ENCODE measurements at regions of chr16 and their contacts with region 1.

Region 1: GRCh38 chr16:16127469-16128116 is 95.7 kb downstream of the ABCC6 start:
- DNase-seq: peak; percentile 82

Region 2: DNA sequence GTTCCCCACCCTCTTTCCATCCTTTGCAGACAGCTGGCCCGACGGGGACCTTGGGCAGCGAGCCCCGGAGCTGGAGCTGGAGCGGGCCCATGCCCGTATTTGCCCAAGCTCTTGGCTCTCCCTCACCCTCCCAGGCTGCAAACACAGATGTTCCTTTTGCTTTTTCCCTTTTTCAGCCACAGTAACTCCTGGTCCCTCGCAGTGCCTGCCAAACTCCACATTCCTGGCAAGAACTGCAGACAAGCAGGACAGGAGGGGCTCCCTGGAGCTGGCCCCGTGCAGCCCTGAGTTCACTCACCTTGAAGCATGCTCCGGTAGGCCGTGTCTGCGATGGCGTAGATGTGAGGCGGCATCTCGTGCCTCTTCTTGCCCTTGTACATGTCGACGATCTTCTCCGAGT is 304.6 kb before region 1 on chr16:
- intact Hi-C with region 1: loop called (anchors 2 kb)
- DNase-seq: peak; percentile 69

Region 3: DNA sequence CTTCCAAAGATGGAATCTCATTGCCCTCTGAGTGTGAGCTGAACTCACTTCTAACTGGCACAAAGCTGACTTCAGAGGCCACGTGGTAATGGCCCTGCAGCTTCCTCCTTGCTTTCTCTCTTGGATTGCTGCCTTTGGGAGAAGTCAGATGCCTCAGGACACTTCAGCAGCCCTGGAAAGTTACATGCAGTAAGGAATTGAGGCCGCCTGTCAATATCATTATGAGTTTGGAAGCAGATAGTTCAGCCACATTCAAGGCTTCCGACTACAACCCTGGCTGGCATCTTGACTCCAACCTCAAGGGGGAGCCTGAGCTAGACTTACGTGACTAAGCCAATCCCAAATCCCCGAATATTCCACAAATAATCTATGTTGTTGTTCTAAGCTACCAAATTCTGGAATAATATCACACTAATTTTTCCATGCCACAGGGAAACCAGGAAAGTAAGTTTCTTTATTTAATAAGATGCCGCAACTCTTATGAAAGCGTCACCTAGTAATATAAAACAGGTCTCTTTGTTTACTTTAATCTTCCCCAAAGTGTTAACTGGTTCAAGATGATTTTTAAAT is 252.8 kb before region 1 on chr16:
- intact Hi-C with region 1: loop called (anchors 2 kb)
- DNase-seq: no peak